ENCODE measurements at regions of chr4 and their contacts with region 1.

Region 1: GRCh38 chr4:173529477-173530325 is at the start of gene HAND2:
- DNase-seq: peak; percentile 91
- H3K4me3 ChIP-seq: peak within 1 kb of the TSS; percentile 61 to 92
- H3K27ac ChIP-seq: peak within 1 kb of the TSS; percentile 99
- H3K4me1 ChIP-seq: peaks cover 0 to 3% of the 10 kb centered on the region in 2 experiments; a peak in 2 of 4 replicates
- H3K27me3 ChIP-seq: no peaks in the 10 kb centered on the region
- CTCF ChIP-seq: no peak
- EP300 ChIP-seq: peak; percentile 16 to 25; a peak in 2 of 4 replicates
- RAD21 ChIP-seq: no peak
- polyA plus RNA-seq, gene HAND2: 94.2 and 106 TPM in 2 replicates

Region 2: DNA sequence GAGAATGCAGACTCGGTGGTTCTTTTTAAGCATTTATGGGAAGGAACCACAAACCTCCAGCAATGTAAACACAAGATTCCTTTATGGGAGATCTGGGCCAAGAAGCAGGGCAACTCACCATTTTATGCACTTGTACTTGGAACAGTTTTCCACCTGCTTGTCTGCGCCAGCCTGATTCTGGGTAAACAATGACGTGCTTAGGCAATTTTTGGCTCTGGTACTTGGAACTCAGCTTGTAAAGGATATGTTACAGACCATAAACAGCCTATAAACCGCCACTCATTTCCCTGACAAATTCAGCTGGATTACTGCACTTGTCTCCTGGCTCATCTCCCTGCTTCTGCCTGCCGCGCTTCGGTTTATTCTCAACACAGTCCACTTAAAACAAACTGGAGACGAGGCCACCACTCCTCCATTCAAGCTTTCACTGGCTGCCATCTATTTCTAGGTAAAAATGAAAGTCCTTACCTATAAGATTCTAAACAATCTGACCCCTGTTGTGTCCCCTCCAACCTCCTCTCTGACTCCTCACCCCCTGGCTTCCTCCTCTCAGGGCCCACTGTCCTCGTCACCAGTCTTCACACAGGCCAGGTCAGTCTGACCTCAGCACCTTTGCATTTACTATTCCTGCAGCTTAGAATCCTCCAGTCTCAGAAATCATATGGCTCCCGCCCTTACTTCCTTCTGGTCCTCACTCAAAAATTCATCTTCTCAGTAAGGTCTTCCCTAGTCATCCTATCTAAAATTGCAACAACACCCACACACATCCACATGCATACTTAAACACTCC is 566.9 kb before region 1 on chr4:
- CTCF ChIA-PET with region 1: no interaction called
- POLR2A ChIA-PET with region 1: no interaction called
- DNase-seq: no peak
- H3K4me3 ChIP-seq: no peak overlapping the region
- H3K27ac ChIP-seq: no peak overlapping the region
- H3K4me1 ChIP-seq: no peaks in the 10 kb centered on the region
- H3K27me3 ChIP-seq: peaks cover 9% of the 10 kb centered on the region; the same call in 1 of the 2 replicates
- CTCF ChIP-seq: no peak
- EP300 ChIP-seq: no peak
- RAD21 ChIP-seq: no peak

Region 3: GRCh38 chr4:173585876-173586572 is 56.3 kb after region 1 on chr4:
- CTCF ChIA-PET with region 1: no interaction called
- POLR2A ChIA-PET with region 1: no interaction called
- DNase-seq: no peak
- H3K4me3 ChIP-seq: no peak overlapping the region
- H3K27ac ChIP-seq: no peak overlapping the region
- H3K4me1 ChIP-seq: peaks cover 0 to 3% of the 10 kb centered on the region in 2 experiments; a peak in 3 of 4 replicates
- H3K27me3 ChIP-seq: no peaks in the 10 kb centered on the region
- CTCF ChIP-seq: no peak
- EP300 ChIP-seq: no peak
- RAD21 ChIP-seq: no peak

Region 4: GRCh38 chr4:173752610-173753230 is 223.0 kb after region 1 on chr4:
- CTCF ChIA-PET with region 1: interaction called, 10 read pairs
- POLR2A ChIA-PET with region 1: interaction called, 30 read pairs
- DNase-seq: no peak
- H3K4me3 ChIP-seq: no peak overlapping the region
- H3K27ac ChIP-seq: peak overlapping the region in 1 of 2 experiments; percentile 94; a peak in 2 of 4 replicates
- H3K4me1 ChIP-seq: peaks cover 0 to 13% of the 10 kb centered on the region in 2 experiments; a peak in 2 of 4 replicates
- H3K27me3 ChIP-seq: no peaks in the 10 kb centered on the region
- CTCF ChIP-seq: peak; percentile 59
- EP300 ChIP-seq: no peak
- RAD21 ChIP-seq: peak; percentile 32

Region 5: GRCh38 chr4:173990126-173990868 is 460.6 kb after region 1 on chr4:
- CTCF ChIA-PET with region 1: interaction called, 20 read pairs
- POLR2A ChIA-PET with region 1: interaction called, 160 read pairs
- DNase-seq: no peak
- H3K4me3 ChIP-seq: 0 out of 4 replicates have a peak overlapping the region, but pooled peaks of 1 of the 2 experiments have one; percentile 2
- H3K27ac ChIP-seq: peak overlapping the region; percentile 15 to 100
- H3K4me1 ChIP-seq: peaks cover 18 to 34% of the 10 kb centered on the region in 2 experiments; a peak in 3 of 4 replicates
- H3K27me3 ChIP-seq: no peaks in the 10 kb centered on the region
- CTCF ChIP-seq: peak; percentile 85
- EP300 ChIP-seq: peak in 1 of 2 experiments; percentile 22; a peak in 1 of 4 replicates
- RAD21 ChIP-seq: peak; percentile 85

Region 6: GRCh38 chr4:174069848-174070330 is 540.2 kb after region 1 on chr4:
- CTCF ChIA-PET with region 1: no interaction called
- POLR2A ChIA-PET with region 1: interaction called, 41 read pairs
- DNase-seq: peak; percentile 69
- H3K4me3 ChIP-seq: no peak overlapping the region
- H3K27ac ChIP-seq: peak overlapping the region in 1 of 2 experiments; percentile 100; a peak in 2 of 4 replicates
- H3K4me1 ChIP-seq: peaks cover 0 to 26% of the 10 kb centered on the region in 2 experiments; a peak in 2 of 4 replicates
- H3K27me3 ChIP-seq: no peaks in the 10 kb centered on the region
- CTCF ChIP-seq: no peak
- EP300 ChIP-seq: peak; percentile 82 to 100
- RAD21 ChIP-seq: peak; percentile 46

Region 7: GRCh38 chr4:174147863-174148262 is 618.2 kb after region 1 on chr4:
- CTCF ChIA-PET with region 1: interaction called, 3 read pairs
- POLR2A ChIA-PET with region 1: interaction called, 29 read pairs
- DNase-seq: no peak
- H3K4me3 ChIP-seq: no peak overlapping the region
- H3K27ac ChIP-seq: peak overlapping the region in 1 of 2 experiments; percentile 100; a peak in 2 of 4 replicates
- H3K4me1 ChIP-seq: peaks cover 7 to 49% of the 10 kb centered on the region in 2 experiments; a peak in 3 of 4 replicates
- H3K27me3 ChIP-seq: no peaks in the 10 kb centered on the region
- CTCF ChIP-seq: no peak
- EP300 ChIP-seq: no peak
- RAD21 ChIP-seq: no peak

Region 8: DNA sequence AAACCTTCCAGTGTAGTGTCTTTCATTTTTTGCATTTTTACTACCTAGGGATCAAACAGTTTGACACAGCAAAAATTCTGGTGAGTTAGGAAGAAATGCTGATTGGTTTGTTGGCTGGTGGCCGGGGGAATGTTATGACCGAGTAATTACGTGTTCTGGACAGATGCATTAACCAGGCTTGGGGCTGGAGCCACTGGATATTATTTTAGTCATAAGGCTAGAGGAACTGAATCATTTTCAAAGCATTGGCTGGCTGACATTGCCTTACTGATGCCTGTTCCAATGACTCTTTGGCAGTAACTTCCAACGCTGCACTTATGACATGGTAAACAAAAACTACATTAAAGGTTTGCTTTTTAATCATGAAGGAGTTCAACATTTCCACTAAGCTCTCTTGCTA is 669.1 kb after region 1 on chr4:
- CTCF ChIA-PET with region 1: no interaction called
- POLR2A ChIA-PET with region 1: interaction called, 34 read pairs
- DNase-seq: peak; percentile 51
- H3K4me3 ChIP-seq: peak overlapping the region; percentile 19 to 42; a peak in 2 of 4 replicates
- H3K27ac ChIP-seq: peak overlapping the region; percentile 83 to 99
- H3K4me1 ChIP-seq: peaks cover 18 to 42% of the 10 kb centered on the region in 2 experiments; a peak in 3 of 4 replicates
- H3K27me3 ChIP-seq: no peaks in the 10 kb centered on the region
- CTCF ChIP-seq: no peak
- EP300 ChIP-seq: peak; percentile 96 to 99
- RAD21 ChIP-seq: 0 out of 2 replicates have a peak, but pooled peaks have one; percentile 20

Measured in SK-N-SH (cell line).